Spleen (tissue), 13 donors: ENCODE measurements at regions of chr5 and their contacts with region 1.

Region 1: DNA sequence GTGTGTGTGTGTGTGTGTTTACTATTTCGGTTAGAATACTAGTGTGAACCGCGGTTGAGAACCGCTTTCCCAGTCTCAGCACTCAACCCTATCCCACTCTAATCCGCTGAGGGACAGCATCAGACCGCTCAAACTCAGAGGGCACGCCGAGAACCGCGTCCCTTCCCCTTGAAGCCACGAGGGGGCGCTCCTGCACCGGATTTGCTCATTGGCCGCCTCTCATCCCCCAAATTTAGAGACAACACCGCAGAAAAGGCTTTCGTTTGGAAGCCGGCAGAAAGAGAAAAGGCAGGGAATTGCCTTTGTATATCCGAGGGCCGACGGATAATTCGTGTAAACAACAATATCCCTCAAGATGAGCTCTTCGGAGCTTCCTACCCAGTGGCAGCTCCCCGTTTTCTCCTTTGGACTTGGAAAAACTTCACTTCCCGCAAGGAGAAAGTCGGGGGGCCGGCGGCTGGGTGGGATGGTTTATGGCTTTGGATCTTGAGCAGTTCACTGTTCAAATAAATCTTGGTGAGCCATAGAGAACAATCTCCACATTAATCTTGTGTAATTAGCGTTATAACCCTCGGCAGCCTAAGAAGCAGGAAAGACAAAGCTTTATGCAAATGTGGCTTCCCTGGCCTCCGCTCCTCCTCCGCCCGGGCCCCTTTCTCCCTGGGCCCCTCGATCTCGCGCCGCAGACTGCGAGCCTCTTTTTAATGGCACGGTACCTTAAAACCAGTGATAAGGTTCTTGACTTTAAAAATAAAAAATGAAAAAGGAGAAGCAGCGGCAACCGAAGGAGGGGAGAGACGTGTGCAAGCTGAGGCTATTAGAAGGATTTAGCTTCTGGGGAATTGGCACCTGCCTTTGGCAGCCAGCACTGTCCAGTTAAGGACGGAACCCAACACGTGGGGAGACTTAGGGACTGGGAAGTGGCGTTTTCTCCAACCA is 296.8 kb downstream of the PARP8 start:
- DNase-seq: peak; percentile 86
- H3K4me3 ChIP-seq: peak overlapping the region; percentile 21 to 69 (median 42)
- H3K27ac ChIP-seq: no peak overlapping the region
- H3K4me1 ChIP-seq: peaks cover 17 to 54% (median 39%) of the 10 kb centered on the region in 6 donors
- H3K27me3 ChIP-seq: peaks cover 0 to 97% (median 67%) of the 10 kb centered on the region in 7 donors
- CTCF ChIP-seq: peak; percentile 44 to 84 (median 79)
- POLR2A ChIP-seq: no peak

Region 2: GRCh38 chr5:52007230-52007858 is 1044.1 kb after region 1 on chr5:
- intact Hi-C with region 1: loop called (anchors 5 kb)
- DNase-seq: no peak
- H3K4me3 ChIP-seq: no peak overlapping the region
- H3K27ac ChIP-seq: no peak overlapping the region
- H3K4me1 ChIP-seq: no peaks in the 10 kb centered on the region
- H3K27me3 ChIP-seq: no peaks in the 10 kb centered on the region
- CTCF ChIP-seq: peak in 5 of 11 experiments; percentile 18 to 42 (median 33)
- POLR2A ChIP-seq: no peak

Region 3: DNA sequence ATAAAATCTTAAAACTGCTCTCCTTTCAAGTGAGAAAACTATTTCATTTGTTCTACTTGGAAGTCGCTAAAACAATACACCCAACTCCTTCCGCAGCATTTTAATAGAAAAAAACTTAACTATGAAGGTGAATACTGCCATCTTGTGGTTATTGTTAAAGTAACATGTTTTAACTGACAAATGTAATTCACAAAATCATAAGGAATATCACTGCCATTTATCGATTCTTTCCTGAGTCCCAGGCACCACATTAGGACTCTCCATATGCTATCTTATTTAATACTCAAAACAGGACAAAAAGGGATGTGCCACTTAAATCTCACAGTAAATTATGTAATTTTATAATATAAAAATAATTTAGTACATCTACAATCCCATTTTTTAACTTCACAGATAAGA is 1694.0 kb after region 1 on chr5:
- intact Hi-C with region 1: loop called (anchors 5 kb)
- DNase-seq: no peak
- H3K4me3 ChIP-seq: no peak overlapping the region
- H3K27ac ChIP-seq: no peak overlapping the region
- H3K4me1 ChIP-seq: peaks cover 0 to 11% (median 4%) of the 10 kb centered on the region in 6 donors
- H3K27me3 ChIP-seq: peaks cover 0 to 8% (median 0%) of the 10 kb centered on the region in 7 donors
- CTCF ChIP-seq: peak in 9 of 11 experiments; percentile 22 to 60 (median 53)
- POLR2A ChIP-seq: no peak